ENCODE measurements at regions of chr20 and their contacts with region 1.

Region 1: DNA sequence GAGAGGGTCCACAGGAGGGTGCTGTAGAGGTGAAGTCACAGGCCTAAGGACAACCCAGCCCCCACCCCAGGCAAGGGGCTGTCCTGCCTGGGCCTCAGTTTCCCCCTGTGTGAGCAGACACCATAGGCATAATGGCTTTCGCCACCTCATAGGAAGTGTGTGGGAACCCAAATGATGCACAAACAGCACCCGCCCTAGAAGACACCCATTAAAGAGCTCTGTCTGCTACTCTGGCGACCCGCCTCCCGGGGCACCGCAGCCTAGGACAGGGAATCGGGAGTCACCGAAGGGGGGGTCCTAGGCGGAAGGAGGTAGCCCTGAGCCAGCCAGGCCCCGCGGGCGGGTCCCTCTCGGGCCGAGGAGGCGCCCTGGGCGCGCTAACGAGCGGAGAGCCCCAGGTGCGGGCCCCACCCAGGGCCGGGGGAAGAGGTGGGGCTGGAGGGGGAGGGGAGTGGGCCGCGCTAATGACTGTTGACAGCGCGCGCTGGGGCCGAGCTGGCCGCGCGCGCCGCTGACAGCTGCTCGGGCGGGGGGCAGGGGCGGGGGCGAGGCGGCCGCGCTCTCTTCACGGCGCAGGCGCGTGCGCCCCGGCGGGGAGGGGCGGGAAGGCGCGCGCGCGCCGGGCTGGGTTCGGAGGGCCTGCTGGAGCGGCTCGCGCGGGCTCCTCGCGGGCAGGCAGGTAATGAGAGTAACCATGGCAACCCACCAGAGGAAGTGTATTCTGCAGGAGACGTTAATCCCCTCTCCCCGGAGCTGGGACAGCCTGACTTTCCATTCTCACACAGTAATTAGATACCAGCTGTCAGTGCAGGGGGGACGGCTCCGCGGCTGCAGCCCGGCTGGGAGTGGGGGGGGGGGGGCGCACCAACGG is 48.9 kb downstream of the NOL4L start:
- DNase-seq: peak; percentile 79
- ATAC-seq: peak; percentile 47
- H3K4me3 ChIP-seq: peak overlapping the region; percentile 52 to 70 (median 64); a peak in 5 of 6 replicates
- H3K27ac ChIP-seq: peak overlapping the region; percentile 44
- H3K4me1 ChIP-seq: peaks cover 79% of the 10 kb centered on the region
- H3K27me3 ChIP-seq: no peaks in the 10 kb centered on the region
- CTCF ChIP-seq: no peak; the same call in 1 of the 2 replicates
- EP300 ChIP-seq: no peak
- POLR2A ChIP-seq: no peak
- RAD21 ChIP-seq: no peak; the same call in 1 of the 2 replicates

Region 2: DNA sequence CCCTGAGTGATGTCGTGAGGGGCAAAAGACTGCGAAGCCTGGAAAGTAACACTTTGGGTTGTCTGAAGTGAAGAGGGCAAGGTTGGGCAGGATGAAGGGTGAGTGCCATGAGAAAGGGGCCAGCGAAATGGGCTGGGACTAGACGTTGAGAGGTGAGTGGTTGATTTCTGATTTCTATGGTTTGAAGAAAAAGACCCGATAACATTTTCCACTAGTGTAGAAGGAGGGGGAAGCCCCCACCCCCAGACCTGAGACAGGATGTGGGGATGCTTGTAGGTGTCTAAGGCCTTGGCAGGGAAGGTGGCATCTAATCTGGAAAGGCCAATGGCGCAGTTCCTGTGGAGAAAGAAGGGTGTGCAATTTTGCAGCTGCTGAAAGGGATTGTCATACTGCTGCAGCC is 284.0 kb before region 1 on chr20:
- CTCF ChIA-PET with region 1: no interaction called
- POLR2A ChIA-PET with region 1: no interaction called
- in situ Hi-C with region 1: no loop called
- intact Hi-C with region 1: loop called (anchors 5 kb)
- DNase-seq: no peak
- ATAC-seq: no peak
- H3K4me3 ChIP-seq: no peak overlapping the region
- H3K27ac ChIP-seq: no peak overlapping the region
- H3K4me1 ChIP-seq: peaks cover 46% of the 10 kb centered on the region
- H3K27me3 ChIP-seq: no peaks in the 10 kb centered on the region
- CTCF ChIP-seq: no peak
- EP300 ChIP-seq: no peak
- POLR2A ChIP-seq: no peak
- RAD21 ChIP-seq: no peak

Region 3: GRCh38 chr20:32560989-32561830 is 25.0 kb after region 1 on chr20:
- CTCF ChIA-PET with region 1: no interaction called
- POLR2A ChIA-PET with region 1: interaction called, 124 read pairs
- in situ Hi-C with region 1: no loop called
- intact Hi-C with region 1: no loop called
- DNase-seq: no peak
- ATAC-seq: peak; percentile 28
- H3K4me3 ChIP-seq: peak overlapping the region; percentile 20 to 65 (median 45); a peak in 5 of 6 replicates
- H3K27ac ChIP-seq: peak overlapping the region; percentile 68
- H3K4me1 ChIP-seq: peaks cover 94% of the 10 kb centered on the region
- H3K27me3 ChIP-seq: no peaks in the 10 kb centered on the region
- CTCF ChIP-seq: no peak
- EP300 ChIP-seq: no peak
- POLR2A ChIP-seq: no peak; a peak in 1 of 4 replicates
- RAD21 ChIP-seq: no peak

Region 4: GRCh38 chr20:32582659-32583580 is 46.7 kb after region 1 on chr20:
- CTCF ChIA-PET with region 1: no interaction called
- POLR2A ChIA-PET with region 1: interaction called, 24 read pairs
- in situ Hi-C with region 1: no loop called
- intact Hi-C with region 1: no loop called
- DNase-seq: no peak
- ATAC-seq: peak; percentile 16
- H3K4me3 ChIP-seq: peak overlapping the region; percentile 65 to 97 (median 70)
- H3K27ac ChIP-seq: peak overlapping the region; percentile 84
- H3K4me1 ChIP-seq: peaks cover 44% of the 10 kb centered on the region
- H3K27me3 ChIP-seq: peaks cover 11 to 25% of the 10 kb centered on the region in 2 experiments; a peak in 4 of 5 replicates
- CTCF ChIP-seq: peak; percentile 2; the same call in 1 of the 2 replicates
- EP300 ChIP-seq: no peak; a peak in 1 of 4 replicates
- POLR2A ChIP-seq: peak in 1 of 2 experiments; percentile 62; a peak in 2 of 4 replicates
- RAD21 ChIP-seq: 0 out of 2 replicates have a peak, but pooled peaks have one; percentile 44

Measured in HepG2 (cell line).